ENCODE measurements at regions of chr3 and their contacts with region 1.

Region 1: GRCh38 chr3:50470658-50471057 is 32.8 kb downstream of the CACNA2D2 start:
- DNase-seq: no peak
- H3K4me3 ChIP-seq: no peak overlapping the region
- H3K27ac ChIP-seq: no peak overlapping the region
- H3K4me1 ChIP-seq: no peaks in the 10 kb centered on the region
- H3K27me3 ChIP-seq: no peaks in the 10 kb centered on the region
- CTCF ChIP-seq: no peak
- POLR2A ChIP-seq: no peak

Region 2: DNA sequence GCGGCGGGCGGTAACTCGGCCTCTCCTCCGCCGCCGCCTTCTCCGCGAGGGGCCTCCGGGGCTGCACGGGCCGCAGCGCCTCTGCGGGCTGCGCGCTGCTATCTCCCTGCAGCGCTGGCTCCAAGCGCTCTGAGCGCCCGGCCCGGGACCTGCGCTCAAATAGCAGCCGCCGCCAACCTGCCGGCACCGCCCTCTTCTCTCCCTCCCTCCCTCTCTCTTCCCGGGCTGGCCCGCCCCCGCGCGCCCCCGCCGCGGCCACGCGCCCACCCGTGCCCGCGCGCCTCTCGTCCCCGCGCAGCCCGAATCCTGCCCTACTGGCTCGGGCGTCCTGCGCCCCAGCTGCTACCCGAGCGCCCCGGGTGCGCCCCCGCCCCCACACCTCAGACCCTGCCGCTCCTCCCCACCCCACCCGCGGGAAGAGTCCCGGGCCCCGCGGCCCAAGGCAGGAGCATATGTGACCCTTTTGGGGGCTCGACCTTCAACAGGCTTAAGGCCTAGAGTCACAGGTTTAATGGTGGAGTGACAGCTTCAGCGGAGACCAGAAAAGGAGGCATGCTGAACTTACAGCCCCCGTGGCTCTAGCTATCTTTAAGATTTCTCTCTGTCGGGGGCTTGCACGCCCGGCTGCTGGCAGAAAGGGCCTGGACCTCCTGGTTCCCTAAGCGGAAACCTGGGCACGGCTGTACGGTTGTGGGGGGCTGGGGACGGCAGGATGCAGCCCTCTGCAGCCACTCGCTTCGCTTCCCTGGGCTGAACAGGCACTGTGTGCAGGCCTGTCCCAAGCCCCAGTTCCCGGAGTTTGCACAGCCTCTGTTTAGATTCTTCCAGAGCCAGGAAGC is 33.1 kb after region 1 on chr3 and contains the start of gene CACNA2D2:
- intact Hi-C with region 1: loop called (anchors 1 kb)
- DNase-seq: peak; percentile 49 to 73
- H3K4me3 ChIP-seq: peak within 1 kb of the TSS; percentile 43 to 86 (median 64)
- H3K27ac ChIP-seq: peak within 1 kb of the TSS; percentile 48 to 72
- H3K4me1 ChIP-seq: peaks cover 4 to 7% of the 10 kb centered on the region in 2 donors
- H3K27me3 ChIP-seq: no peaks in the 10 kb centered on the region
- CTCF ChIP-seq: no peak
- POLR2A ChIP-seq: no peak
- total RNA-seq, gene CACNA2D2: 0.80 to 2.0 (median 1.5) TPM

Region 3: GRCh38 chr3:50530001-50530970 is 59.6 kb after region 1 on chr3:
- intact Hi-C with region 1: no loop called
- DNase-seq: no peak
- H3K4me3 ChIP-seq: peak overlapping the region in 2 of 3 donors; percentile 32 to 61
- H3K27ac ChIP-seq: no peak overlapping the region
- H3K4me1 ChIP-seq: no peaks in the 10 kb centered on the region
- H3K27me3 ChIP-seq: no peaks in the 10 kb centered on the region
- CTCF ChIP-seq: no peak
- POLR2A ChIP-seq: no peak